ENCODE measurements at regions of chr17 and their contacts with region 1.

Region 1: GRCh38 chr17:47889734-47890529 is 6.1 kb upstream of the SP2 start:
- DNase-seq: peak; percentile 64
- H3K27ac ChIP-seq: no peak overlapping the region
- CTCF ChIP-seq: peak; percentile 96

Region 2: DNA sequence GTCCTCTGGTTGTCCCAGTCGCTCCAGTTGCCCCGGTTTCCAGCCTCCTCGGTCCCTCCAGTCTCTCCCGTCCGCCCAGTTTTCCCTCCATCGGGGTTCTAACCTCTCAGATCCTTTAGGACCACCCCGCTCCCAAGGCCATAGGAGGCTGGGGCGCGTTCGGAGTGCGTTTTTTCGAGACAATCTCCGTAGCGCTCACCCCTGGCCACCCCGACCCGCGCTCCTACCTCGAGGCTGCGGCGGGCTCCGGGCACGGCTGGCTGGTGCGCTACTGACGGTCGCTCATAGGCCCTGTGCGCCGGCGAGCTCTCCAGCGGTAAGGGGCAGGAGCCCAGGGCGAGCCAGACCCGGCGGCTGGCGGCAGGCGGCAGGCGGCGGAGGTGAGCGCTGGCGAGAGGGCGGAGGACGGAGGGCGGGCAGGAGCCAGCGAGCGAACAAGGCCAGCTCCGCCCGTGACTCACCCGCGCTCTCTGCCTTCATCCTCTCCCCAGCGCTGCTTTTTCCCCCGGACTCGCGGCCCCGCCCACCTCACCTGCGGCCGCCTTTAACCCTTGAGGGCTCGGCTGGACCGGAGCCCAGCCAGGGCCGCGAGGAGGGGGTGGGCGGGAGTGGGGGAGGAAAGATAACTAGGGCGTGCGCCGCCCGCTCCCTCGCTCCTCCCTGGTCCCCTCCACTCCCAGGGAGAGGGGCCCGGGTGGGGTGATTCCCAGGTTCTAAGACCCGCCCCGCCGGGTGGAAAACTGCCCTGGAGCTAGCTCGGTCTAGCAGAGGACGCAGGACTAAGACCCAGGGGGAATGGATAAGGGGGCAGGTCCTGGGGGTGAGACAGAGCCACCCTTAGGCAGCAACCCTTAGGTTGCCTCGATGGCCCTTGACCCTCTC is 39.0 kb before region 1 on chr17 and contains the start of gene SP6:
- CTCF ChIA-PET with region 1: interaction called, 77 read pairs
- POLR2A ChIA-PET with region 1: no interaction called
- DNase-seq: peak; percentile 89
- H3K27ac ChIP-seq: peak within 1 kb of the TSS; percentile 66
- CTCF ChIP-seq: peak; percentile 41

Region 3: GRCh38 chr17:48011405-48012150 is 121.6 kb after region 1 on chr17:
- CTCF ChIA-PET with region 1: no interaction called
- POLR2A ChIA-PET with region 1: no interaction called
- DNase-seq: peak; percentile 18
- H3K27ac ChIP-seq: no peak overlapping the region
- CTCF ChIP-seq: peak; percentile 68